ENCODE measurements at regions of chr9 and their contacts with region 1.

Region 1: DNA sequence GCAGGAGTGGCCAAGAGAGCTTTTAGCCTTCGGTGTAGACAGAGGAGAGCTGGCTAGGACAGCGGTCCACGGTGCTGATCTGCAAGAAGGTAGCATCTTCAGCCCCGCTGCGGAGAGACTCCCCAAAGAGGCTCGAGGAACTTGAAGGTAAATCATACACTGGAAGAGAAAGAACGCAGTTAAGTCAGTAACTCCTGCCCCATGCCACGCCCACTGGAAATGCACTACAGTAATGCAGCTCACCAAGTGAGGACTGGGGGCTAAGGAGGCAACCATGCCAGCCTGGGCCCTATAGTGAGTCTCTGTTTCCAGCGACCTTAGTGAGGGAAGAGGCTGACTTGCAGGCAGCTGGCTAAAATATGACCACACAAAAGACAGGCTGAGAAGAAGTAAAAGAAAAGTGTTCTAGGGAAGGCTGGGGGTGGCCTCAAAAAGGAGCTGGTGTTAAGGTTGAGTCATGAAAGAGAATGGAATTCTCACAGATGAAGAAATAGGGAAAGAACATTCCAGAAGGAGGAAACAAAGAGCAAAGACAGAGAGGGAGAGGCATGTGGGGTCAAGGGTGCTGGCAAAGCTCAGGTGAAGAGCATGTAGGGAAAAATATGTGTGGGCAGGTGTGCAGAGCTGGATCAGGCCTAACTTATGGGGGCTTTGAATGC is 302.6 kb upstream of the RFX3 start:
- DNase-seq: no peak
- ATAC-seq: no peak
- H3K4me3 ChIP-seq: no peak overlapping the region
- H3K27ac ChIP-seq: no peak overlapping the region
- H3K4me1 ChIP-seq: no peaks in the 10 kb centered on the region
- H3K27me3 ChIP-seq: no peaks in the 10 kb centered on the region
- CTCF ChIP-seq: no peak
- POLR2A ChIP-seq: no peak

Region 2: DNA sequence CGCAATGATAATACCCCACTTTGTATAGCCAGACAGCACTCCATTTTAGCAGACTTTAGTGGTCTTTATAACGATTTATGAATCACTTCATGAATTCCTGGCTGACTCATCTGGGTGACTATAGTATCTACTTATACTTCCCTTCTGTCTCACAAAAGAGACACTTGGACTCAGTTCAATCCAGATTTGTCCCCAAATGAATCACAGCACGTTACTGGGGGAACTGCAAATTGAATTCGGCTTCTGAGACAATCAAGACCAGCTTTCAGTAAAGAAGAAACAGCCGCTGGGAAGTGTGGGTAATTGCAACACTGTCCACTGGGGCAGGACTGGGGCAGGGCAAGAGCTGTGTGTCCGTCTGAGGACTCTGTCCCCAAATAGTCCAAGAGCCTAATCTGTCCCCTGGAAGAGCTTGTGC is 34.7 kb after region 1 on chr9:
- intact Hi-C with region 1: no loop called
- DNase-seq: no peak
- ATAC-seq: peak in 3 of 4 donors; percentile 34 to 80 (median 70)
- H3K4me3 ChIP-seq: no peak overlapping the region
- H3K27ac ChIP-seq: no peak overlapping the region
- H3K4me1 ChIP-seq: peaks cover 0 to 6% (median 0%) of the 10 kb centered on the region in 12 donors
- H3K27me3 ChIP-seq: no peaks in the 10 kb centered on the region
- CTCF ChIP-seq: no peak
- POLR2A ChIP-seq: no peak

Region 3: DNA sequence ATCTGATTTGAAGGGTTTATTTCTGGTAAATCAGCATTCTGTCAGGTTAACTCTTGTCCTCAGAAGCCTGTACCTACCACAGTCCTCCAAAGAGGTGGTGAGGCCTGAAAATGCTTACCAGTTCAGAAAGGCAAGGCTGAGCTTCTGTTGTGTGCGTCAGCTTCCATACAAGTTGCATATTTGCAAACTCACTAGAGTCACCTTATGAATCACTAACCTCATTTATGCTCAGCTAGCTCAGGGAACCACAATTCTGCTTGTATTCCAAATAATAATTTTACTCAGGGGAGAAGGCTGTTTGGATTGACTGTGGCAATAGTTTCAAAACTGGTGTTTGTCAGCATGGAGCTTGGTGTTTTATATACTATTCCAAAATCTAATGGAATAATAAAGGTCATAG is 52.5 kb after region 1 on chr9:
- intact Hi-C with region 1: loop called in 1 of 10 experiments (anchors 10 kb)
- DNase-seq: no peak
- ATAC-seq: peak in 2 of 4 donors; percentile 31 to 39
- H3K4me3 ChIP-seq: no peak overlapping the region
- H3K27ac ChIP-seq: no peak overlapping the region
- H3K4me1 ChIP-seq: peaks cover 0 to under 1% (median 0%) of the 10 kb centered on the region in 12 donors
- H3K27me3 ChIP-seq: no peaks in the 10 kb centered on the region
- CTCF ChIP-seq: no peak
- POLR2A ChIP-seq: no peak

Region 4: GRCh38 chr9:3894772-3895171 is 66.4 kb after region 1 on chr9:
- intact Hi-C with region 1: loop called in 2 of 10 experiments (anchors 10 kb)
- DNase-seq: no peak
- ATAC-seq: no peak
- H3K4me3 ChIP-seq: no peak overlapping the region
- H3K27ac ChIP-seq: no peak overlapping the region
- H3K4me1 ChIP-seq: peaks cover 0 to 18% (median 0%) of the 10 kb centered on the region in 12 donors
- H3K27me3 ChIP-seq: no peaks in the 10 kb centered on the region
- CTCF ChIP-seq: no peak
- POLR2A ChIP-seq: no peak

Measured in heart left ventricle (tissue), 16 donors.